ENCODE measurements at regions of chr9 and their contacts with region 1.

Region 1: DNA sequence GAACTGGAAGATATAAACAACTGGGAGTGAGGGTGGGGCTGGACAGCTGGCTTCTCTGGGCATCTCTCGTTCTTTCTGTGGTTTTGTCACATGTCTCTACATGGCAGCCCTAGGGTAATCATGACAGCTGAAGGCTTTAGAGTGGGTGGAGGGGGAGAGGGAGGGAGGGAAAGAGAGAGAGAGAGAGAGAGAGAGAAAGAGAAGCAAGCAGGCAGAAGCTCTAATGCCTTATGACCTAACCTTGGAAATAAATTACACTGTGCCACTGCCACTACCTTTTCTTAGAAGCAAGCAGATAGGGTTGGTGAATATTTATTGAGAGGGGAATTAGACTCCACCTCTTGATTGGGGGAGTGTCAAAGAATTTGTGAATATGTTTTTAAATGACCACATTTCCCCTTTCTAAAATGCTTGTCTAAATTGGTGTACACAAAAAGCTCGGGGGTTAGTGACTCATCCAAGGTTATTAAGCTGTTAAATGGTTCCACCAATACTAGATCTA is 2.6 kb upstream of the DAPK1 start:
- DNase-seq: no peak
- ATAC-seq: no peak
- H3K4me3 ChIP-seq: no peak overlapping the region
- H3K27ac ChIP-seq: no peak overlapping the region
- H3K4me1 ChIP-seq: no peaks in the 10 kb centered on the region
- H3K27me3 ChIP-seq: peaks cover 23% of the 10 kb centered on the region; the same call in 1 of the 2 replicates
- CTCF ChIP-seq: no peak
- POLR2A ChIP-seq: no peak
- RAD21 ChIP-seq: no peak

Region 2: GRCh38 chr9:87059772-87060171 is 435.2 kb before region 1 on chr9:
- CTCF ChIA-PET with region 1: no interaction called
- POLR2A ChIA-PET with region 1: no interaction called
- dilution Hi-C with region 1: no loop called
- in situ Hi-C with region 1: no loop called
- intact Hi-C with region 1: no loop called
- DNase-seq: no peak
- ATAC-seq: no peak
- H3K4me3 ChIP-seq: no peak overlapping the region
- H3K27ac ChIP-seq: no peak overlapping the region
- H3K4me1 ChIP-seq: no peaks in the 10 kb centered on the region
- H3K27me3 ChIP-seq: no peaks in the 10 kb centered on the region
- CTCF ChIP-seq: no peak
- POLR2A ChIP-seq: no peak
- RAD21 ChIP-seq: no peak

Region 3: DNA sequence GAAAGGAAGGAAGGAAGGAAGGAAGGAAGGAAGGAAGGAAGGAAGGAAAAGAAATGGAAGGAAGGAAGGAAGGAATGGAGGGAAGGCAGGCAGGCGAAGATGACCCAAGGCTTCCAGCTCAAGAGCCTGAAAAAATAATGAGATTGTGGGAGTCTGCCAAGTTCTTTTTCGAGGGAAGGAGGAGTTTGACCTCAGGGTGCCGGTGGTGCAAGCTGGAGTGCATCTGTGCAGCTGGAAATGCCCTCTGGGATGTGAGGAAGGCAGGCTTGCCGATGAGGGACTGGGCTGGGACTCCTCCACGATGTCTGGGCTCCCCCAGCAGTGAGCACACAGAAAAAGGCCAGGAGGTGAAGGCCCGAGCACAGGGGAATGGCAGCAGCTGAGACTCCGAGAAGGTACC is 152.3 kb before region 1 on chr9:
- CTCF ChIA-PET with region 1: no interaction called
- POLR2A ChIA-PET with region 1: no interaction called
- dilution Hi-C with region 1: no loop called
- in situ Hi-C with region 1: no loop called
- intact Hi-C with region 1: no loop called
- DNase-seq: no peak
- ATAC-seq: peak; percentile 70
- H3K4me3 ChIP-seq: no peak overlapping the region
- H3K27ac ChIP-seq: no peak overlapping the region
- H3K4me1 ChIP-seq: peaks cover 3% of the 10 kb centered on the region; the same call in 1 of the 2 replicates
- H3K27me3 ChIP-seq: peaks cover 36% of the 10 kb centered on the region
- CTCF ChIP-seq: no peak
- POLR2A ChIP-seq: no peak
- RAD21 ChIP-seq: no peak

Region 4: DNA sequence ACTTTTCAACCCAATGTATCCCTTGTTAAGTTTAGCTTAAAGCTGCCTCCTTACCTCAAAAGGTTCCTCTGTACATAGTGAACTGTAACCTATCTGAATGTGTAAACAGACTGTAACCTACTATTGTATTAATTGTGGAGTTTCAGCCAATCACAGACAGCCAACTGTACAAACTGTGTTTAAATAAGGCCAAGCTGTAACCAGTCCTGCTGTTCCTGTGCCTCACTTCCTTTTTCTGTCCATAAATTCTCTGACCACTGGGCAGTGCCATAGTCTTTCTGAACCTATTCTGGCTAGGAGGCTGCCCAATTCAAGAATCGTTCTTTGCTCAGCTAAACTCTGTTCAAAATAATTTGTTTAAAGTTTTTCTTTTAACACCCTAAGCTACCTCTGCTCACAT is 72.0 kb before region 1 on chr9:
- CTCF ChIA-PET with region 1: no interaction called
- POLR2A ChIA-PET with region 1: interaction called, 12 read pairs
- dilution Hi-C with region 1: no loop called
- in situ Hi-C with region 1: no loop called
- intact Hi-C with region 1: no loop called
- DNase-seq: no peak
- ATAC-seq: no peak
- H3K4me3 ChIP-seq: no peak overlapping the region
- H3K27ac ChIP-seq: no peak overlapping the region
- H3K4me1 ChIP-seq: no peaks in the 10 kb centered on the region
- H3K27me3 ChIP-seq: no peaks in the 10 kb centered on the region; the same call in 1 of the 2 replicates
- CTCF ChIP-seq: no peak
- POLR2A ChIP-seq: no peak
- RAD21 ChIP-seq: no peak

Region 5: GRCh38 chr9:87533272-87533671 is 38.3 kb after region 1 on chr9:
- CTCF ChIA-PET with region 1: no interaction called
- POLR2A ChIA-PET with region 1: no interaction called
- dilution Hi-C with region 1: no loop called
- in situ Hi-C with region 1: no loop called
- intact Hi-C with region 1: loop called (anchors 2 kb)
- DNase-seq: no peak
- ATAC-seq: no peak
- H3K4me3 ChIP-seq: no peak overlapping the region
- H3K27ac ChIP-seq: no peak overlapping the region
- H3K4me1 ChIP-seq: no peaks in the 10 kb centered on the region
- H3K27me3 ChIP-seq: peaks cover 2% of the 10 kb centered on the region; the same call in 1 of the 2 replicates
- CTCF ChIP-seq: no peak
- POLR2A ChIP-seq: no peak
- RAD21 ChIP-seq: no peak